ENCODE measurements at regions of chr1 and their contacts with region 1.

Region 1: DNA sequence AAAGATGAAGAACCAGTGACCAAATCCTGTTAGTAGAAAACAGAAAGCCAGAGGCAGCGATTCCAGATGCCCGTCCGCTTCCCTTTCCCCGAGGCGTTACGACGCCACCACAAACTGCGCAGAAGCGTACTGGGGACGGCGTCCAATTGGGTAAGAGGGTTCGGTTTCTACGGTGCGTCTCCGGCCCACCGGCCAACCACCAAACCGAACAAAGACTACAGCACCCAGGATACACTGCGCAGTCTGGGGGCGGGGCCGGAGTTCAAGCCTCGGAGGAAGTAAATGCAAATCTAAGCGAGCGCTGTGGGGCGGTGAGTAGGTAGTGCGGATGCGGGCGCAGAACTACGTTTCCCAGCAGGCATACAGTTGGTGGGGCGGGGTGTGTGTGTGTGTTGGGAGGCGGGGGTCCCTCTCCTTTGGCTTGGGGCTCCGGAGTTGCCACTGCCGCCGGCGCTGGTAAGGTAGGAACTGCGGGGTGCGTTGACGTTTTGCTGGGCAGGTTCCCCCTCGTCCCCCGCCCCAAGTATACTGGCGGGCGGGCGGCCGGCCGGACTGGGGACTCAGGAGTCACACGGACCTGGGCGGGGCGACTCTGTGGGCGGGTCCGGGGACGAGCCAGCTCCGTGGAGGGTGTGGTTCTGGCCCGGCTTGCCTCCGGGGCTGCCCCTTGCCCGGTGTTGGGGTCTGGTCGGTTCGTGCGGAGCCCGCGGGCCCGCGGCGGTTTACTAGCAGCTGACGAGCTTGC is at the starts of genes SWT1 and TRMT1L:
- DNase-seq: peak; percentile 98 to 99
- ATAC-seq: peak; percentile 95 to 99 (median 96)
- H3K4me3 ChIP-seq: peak within 1 kb of the TSS; percentile 71 to 95 (median 81)
- H3K27ac ChIP-seq: peak within 1 kb of the TSS; percentile 93 to 99 (median 97)
- H3K4me1 ChIP-seq: peaks cover 3 to 59% (median 39%) of the 10 kb centered on the region in 9 donors
- H3K27me3 ChIP-seq: no peaks in the 10 kb centered on the region
- CTCF ChIP-seq: no peak
- total RNA-seq, gene SWT1: 3.6 to 7.9 (median 6.2) TPM
- total RNA-seq, gene TRMT1L: 19.2 to 34.1 (median 26.7) TPM

Region 2: GRCh38 chr1:184754476-184755225 is 402.4 kb before region 1 on chr1 and contains the start of gene EDEM3:
- intact Hi-C with region 1: loop called in 2 of 10 experiments (anchors 1 to 5 kb)
- DNase-seq: peak; percentile 97 to 100
- ATAC-seq: peak; percentile 97 to 99 (median 98)
- H3K4me3 ChIP-seq: peak within 1 kb of the TSS; percentile 71 to 98 (median 94)
- H3K27ac ChIP-seq: peak within 1 kb of the TSS; percentile 77 to 99 (median 94)
- H3K4me1 ChIP-seq: peaks cover 0 to 40% (median 20%) of the 10 kb centered on the region in 9 donors
- H3K27me3 ChIP-seq: no peaks in the 10 kb centered on the region
- CTCF ChIP-seq: no peak
- total RNA-seq, gene EDEM3: 12.1 to 26.8 (median 18.4) TPM

Region 3: GRCh38 chr1:184810735-184811343 is 346.2 kb before region 1 on chr1:
- intact Hi-C with region 1: loop called in 3 of 10 experiments (anchors 5 to 10 kb)
- DNase-seq: peak in 1 of 2 donors; percentile 54
- ATAC-seq: peak in 5 of 8 donors; percentile 34 to 60 (median 55)
- H3K4me3 ChIP-seq: no peak overlapping the region
- H3K27ac ChIP-seq: peak overlapping the region in 8 of 10 donors; percentile 11 to 73 (median 61)
- H3K4me1 ChIP-seq: peaks cover 4 to 33% (median 26%) of the 10 kb centered on the region in 9 donors
- H3K27me3 ChIP-seq: no peaks in the 10 kb centered on the region
- CTCF ChIP-seq: no peak

Region 4: DNA sequence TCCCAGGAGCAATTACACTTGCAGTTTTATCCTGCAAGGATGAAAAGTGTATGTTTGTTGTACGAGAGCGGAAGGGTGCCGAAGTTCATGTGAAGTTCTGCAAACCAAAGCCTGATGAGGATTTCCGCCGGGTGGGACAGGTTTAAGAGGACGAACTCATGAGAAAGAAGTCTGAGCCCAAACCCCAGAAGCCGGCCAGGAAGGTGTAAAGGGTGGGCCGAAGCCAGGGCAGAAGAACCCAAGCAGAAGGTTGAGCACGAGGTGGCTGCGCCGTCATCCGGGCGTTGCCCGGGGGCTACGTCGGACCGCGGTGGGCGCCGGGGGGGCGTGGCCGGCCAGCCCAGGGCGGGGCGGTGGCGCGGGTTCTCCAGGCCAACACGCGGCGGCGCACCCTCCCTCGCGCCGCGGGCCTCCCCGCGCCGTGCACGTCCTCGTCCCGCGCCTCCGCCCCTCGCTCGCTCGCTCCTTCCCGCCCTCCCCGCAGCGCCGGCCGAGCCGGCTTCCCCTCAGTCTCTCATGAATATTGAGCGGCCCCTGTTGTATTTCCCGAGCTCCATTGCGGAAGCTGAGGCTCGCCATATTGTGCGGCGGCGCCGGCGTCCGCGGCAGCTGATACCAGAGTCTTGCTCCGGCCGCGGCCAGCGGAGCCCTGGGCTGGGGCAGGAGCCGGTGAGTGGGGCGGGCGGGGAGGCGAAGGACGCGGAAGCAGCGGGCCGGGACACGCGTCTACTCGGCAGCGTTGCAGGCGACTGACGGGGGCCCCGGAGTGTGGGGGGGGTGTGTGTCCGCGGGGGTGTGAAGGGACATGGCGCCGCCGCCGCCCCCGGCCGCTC is 111.8 kb before region 1 on chr1 and contains the start of gene RNF2:
- intact Hi-C with region 1: loop called in 6 of 10 experiments (anchors 10 kb)
- DNase-seq: peak; percentile 84 to 85
- ATAC-seq: peak; percentile 88 to 98 (median 94)
- H3K4me3 ChIP-seq: peak within 1 kb of the TSS; percentile 64 to 93 (median 84)
- H3K27ac ChIP-seq: peak within 1 kb of the TSS; percentile 80 to 94 (median 90)
- H3K4me1 ChIP-seq: peaks cover 11 to 40% (median 20%) of the 10 kb centered on the region in 9 donors
- H3K27me3 ChIP-seq: no peaks in the 10 kb centered on the region
- CTCF ChIP-seq: peak in 4 of 9 donors; percentile 4 to 34 (median 20)
- total RNA-seq, gene RNF2: 9.9 to 16.7 (median 14.0) TPM

Region 5: DNA sequence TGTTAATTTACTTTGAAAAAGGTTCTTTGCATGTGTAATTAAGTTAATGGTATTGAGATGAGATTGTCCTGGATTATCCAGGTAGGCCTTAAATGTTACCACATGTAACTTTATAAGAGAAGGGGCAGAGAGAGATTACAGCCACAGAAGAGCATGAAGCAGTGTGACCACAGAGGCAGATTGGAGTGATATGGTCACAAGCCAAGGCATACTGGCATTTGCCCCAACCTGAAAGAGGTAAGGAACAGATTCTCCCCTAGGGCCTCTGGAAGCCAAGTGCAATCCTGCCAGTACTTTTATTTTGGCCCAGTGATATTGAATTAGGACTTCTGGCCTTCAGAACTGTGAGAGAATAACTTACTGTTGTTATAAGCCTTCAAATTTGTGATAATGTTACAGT is 88.7 kb before region 1 on chr1:
- intact Hi-C with region 1: no loop called
- DNase-seq: no peak
- ATAC-seq: peak in 1 of 8 donors; percentile 26
- H3K4me3 ChIP-seq: no peak overlapping the region
- H3K27ac ChIP-seq: no peak overlapping the region
- H3K4me1 ChIP-seq: peaks cover 0 to 27% (median 11%) of the 10 kb centered on the region in 9 donors
- H3K27me3 ChIP-seq: no peaks in the 10 kb centered on the region
- CTCF ChIP-seq: no peak

Region 6: DNA sequence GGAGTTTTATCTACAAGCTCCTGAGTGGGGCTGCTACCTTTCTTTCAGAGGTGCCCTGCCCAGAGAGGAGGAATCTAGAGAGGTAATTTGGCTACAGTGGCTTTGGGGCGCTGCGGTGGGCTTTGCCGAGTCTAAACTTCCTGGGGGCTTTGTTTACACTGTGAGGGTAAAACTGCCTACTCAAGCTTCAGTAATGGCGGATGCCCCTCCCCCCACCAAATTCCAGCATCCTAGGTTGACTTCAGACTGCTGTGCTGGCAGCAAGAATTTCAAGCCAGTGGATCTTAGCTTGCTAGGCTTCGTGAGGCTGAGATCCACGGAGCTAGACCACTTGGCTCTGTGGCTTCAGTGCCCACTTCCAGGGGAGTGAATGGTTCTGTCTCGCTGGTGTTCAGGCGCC is 43.9 kb after region 1 on chr1:
- intact Hi-C with region 1: no loop called
- DNase-seq: no peak
- ATAC-seq: no peak
- H3K4me3 ChIP-seq: no peak overlapping the region
- H3K27ac ChIP-seq: no peak overlapping the region
- H3K4me1 ChIP-seq: no peaks in the 10 kb centered on the region
- H3K27me3 ChIP-seq: no peaks in the 10 kb centered on the region
- CTCF ChIP-seq: no peak

Region 7: GRCh38 chr1:185670187-185670627 is 513.2 kb after region 1 on chr1:
- intact Hi-C with region 1: loop called in 1 of 10 experiments (anchors 5 kb)
- DNase-seq: peak in 1 of 2 donors; percentile 55
- ATAC-seq: peak; percentile 54 to 75 (median 68)
- H3K4me3 ChIP-seq: peak overlapping the region in 2 of 10 donors; percentile 18 to 26
- H3K27ac ChIP-seq: peak overlapping the region in 4 of 10 donors; percentile 13 to 55 (median 16)
- H3K4me1 ChIP-seq: peaks cover 0 to 50% (median 28%) of the 10 kb centered on the region in 9 donors
- H3K27me3 ChIP-seq: no peaks in the 10 kb centered on the region
- CTCF ChIP-seq: peak in 8 of 9 donors; percentile 33 to 81 (median 70)